ENCODE measurements at regions of chr2 and their contacts with region 1.

Region 1: GRCh38 chr2:172113617-172114016 is 10.9 kb upstream of the DLX2 start:
- DNase-seq: peak; percentile 49
- H3K4me3 ChIP-seq: no peak overlapping the region
- H3K27ac ChIP-seq: no peak overlapping the region
- H3K4me1 ChIP-seq: peaks cover 0 to 1% of the 10 kb centered on the region in 2 experiments; a peak in 1 of 4 replicates
- H3K27me3 ChIP-seq: no peaks in the 10 kb centered on the region
- CTCF ChIP-seq: peak; percentile 58
- EP300 ChIP-seq: no peak
- RAD21 ChIP-seq: peak; percentile 69

Region 2: DNA sequence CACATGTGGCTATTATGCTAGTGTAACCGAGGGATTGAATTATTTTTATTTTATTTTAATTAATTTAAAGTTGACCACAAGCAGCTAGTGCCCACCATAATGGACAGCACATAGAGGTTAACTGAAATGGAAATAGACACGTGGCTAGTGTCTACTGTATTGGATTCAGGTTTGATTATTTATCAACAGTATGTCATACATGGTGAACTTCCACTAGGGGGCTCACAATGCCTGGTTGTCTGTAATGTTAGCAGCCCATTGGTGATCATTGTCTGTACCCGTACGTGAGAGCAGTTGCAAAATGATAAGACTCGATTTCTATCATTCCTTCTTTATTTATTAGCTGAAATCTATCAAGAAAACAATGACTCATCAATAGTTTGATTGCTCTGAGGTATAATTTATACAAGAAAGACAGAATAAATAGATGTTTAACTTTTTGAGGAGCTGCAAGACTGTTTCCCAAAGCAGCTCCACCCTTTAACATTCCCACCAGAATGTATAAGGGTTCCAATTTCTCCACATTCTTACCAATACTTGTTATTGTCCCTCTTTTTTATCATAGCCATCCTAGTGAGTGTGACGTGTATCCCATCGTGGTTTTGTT is 514.8 kb before region 1 on chr2:
- CTCF ChIA-PET with region 1: interaction called, 14 read pairs
- POLR2A ChIA-PET with region 1: no interaction called
- DNase-seq: peak; percentile 74
- H3K4me3 ChIP-seq: 0 out of 4 replicates have a peak overlapping the region, but pooled peaks of 1 of the 2 experiments have one; percentile 16
- H3K27ac ChIP-seq: no peak overlapping the region
- H3K4me1 ChIP-seq: 0 out of 4 replicates have a peak, but pooled peaks cover 0 to 5% of the 10 kb centered on the region in 2 experiments
- H3K27me3 ChIP-seq: no peaks in the 10 kb centered on the region; the same call in 1 of the 2 replicates
- CTCF ChIP-seq: peak; percentile 83
- EP300 ChIP-seq: no peak
- RAD21 ChIP-seq: peak; percentile 78